ENCODE measurements at regions of chr19 and their contacts with region 1.

Region 1: GRCh38 chr19:33406521-33407139 is 33.1 kb downstream of the CEBPG start:
- DNase-seq: peak; percentile 89

Region 2: GRCh38 chr19:33143897-33144405 is 262.7 kb before region 1 on chr19:
- intact Hi-C with region 1: loop called (anchors 10 kb)
- DNase-seq: peak; percentile 90

Region 3: GRCh38 chr19:33241530-33242101 is 165.0 kb before region 1 on chr19:
- intact Hi-C with region 1: loop called (anchors 1 kb)
- DNase-seq: no peak

Region 4: GRCh38 chr19:33290956-33291622 is 115.5 kb before region 1 on chr19:
- intact Hi-C with region 1: no loop called
- DNase-seq: no peak

Region 5: GRCh38 chr19:33302175-33302973 is 104.3 kb before region 1 on chr19 and contains the start of gene CEBPA:
- intact Hi-C with region 1: loop called (anchors 5 kb)
- DNase-seq: peak; percentile 92
- total RNA-seq, gene CEBPA: 2.3 TPM

Region 6: GRCh38 chr19:33486936-33487811 is 80.5 kb after region 1 on chr19:
- intact Hi-C with region 1: no loop called
- DNase-seq: peak; percentile 71